Sciatic nerve (tissue), 2 donors: ENCODE measurements at regions of chr22 and their contacts with region 1.

Region 1: DNA sequence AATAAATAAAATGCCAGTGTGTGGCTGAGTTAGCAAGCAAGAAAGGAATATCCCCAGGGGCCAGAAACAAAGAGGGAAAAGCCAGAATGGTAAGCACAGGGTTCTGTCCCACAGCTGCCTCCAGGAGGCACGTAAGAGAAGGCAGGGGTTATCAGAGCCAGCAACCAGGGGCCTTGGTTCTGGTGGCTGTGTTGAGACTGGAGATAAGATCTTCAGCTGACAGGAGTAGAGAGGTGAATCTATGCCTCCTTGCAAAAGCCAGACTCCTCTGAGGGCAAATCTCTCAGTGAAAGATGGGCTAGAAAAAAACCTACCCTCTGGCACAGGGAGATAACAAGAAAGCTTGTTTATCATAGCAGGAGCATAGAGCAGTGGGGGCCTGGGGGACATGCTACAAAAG is 29.8 kb upstream of the NFAM1 start:
- DNase-seq: no peak
- ATAC-seq: no peak

Region 2: DNA sequence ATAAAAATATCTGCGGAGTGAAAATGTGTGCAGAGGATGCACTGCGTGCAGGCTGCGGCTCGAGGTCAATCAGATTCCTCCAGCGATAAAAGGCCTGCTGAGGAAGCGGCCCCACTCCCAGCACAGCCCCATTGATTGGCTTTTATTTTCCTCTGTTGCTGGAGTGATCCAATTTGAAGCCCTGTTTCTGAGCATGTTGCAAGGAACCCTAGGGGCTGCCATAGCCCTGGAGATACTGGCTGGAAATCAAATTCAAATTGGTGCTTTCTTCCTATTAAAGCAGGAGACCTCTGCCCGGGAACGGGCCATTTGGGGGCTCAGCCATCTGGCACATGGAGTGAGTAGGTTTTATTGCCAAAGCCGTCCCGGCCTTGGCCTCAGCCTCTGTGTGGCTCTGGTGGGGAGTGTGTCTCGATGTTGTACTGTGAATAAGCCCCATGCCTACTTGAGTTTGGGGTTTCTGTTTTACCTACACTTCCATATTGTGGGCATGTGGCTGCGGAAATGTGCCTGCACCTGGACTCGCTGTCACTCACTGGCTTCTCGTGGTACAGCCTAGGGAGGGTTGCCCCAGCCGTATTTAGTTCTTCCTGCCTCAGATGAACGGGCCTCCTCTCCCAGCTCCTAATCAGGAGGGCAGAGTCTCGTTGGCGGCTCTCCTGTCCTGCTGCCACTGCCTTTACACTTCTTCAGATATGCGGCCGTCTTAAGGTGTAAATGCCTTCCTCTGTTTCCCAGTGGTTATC is 1587.6 kb after region 1 on chr22:
- intact Hi-C with region 1: loop called (anchors 10 kb)
- DNase-seq: no peak
- ATAC-seq: peak; percentile 46